ENCODE measurements at regions of chr7 and their contacts with region 1.

Region 1: GRCh38 chr7:38796626-38797501 is 112.1 kb downstream of the VPS41 start:
- DNase-seq: peak; percentile 6 to 68 (median 24)
- ATAC-seq: peak; percentile 29
- H3K4me3 ChIP-seq: no peak overlapping the region
- H3K4me3 Mint-ChIP-seq: no peak overlapping the region
- H3K27ac ChIP-seq: no peak overlapping the region
- H3K27ac Mint-ChIP-seq: no peak overlapping the region
- H3K4me1 ChIP-seq: no peaks in the 10 kb centered on the region
- H3K4me1 Mint-ChIP-seq: no peaks in the 10 kb centered on the region
- H3K27me3 ChIP-seq: no peaks in the 10 kb centered on the region
- H3K27me3 Mint-ChIP-seq: no peaks in the 10 kb centered on the region
- CTCF ChIP-seq: peak; percentile 79

Region 2: GRCh38 chr7:39465055-39465929 is 668.4 kb after region 1 on chr7:
- CTCF ChIA-PET with region 1: no interaction called
- POLR2A ChIA-PET with region 1: no interaction called
- intact Hi-C with region 1: loop called in 1 of 2 experiments (anchors 2 kb)
- DNase-seq: peak in 9 of 14 experiments; percentile 1 to 53 (median 14)
- ATAC-seq: peak; percentile 49
- H3K4me3 ChIP-seq: no peak overlapping the region
- H3K4me3 Mint-ChIP-seq: no peak overlapping the region
- H3K27ac ChIP-seq: no peak overlapping the region
- H3K27ac Mint-ChIP-seq: no peak overlapping the region
- H3K4me1 ChIP-seq: no peaks in the 10 kb centered on the region
- H3K4me1 Mint-ChIP-seq: peaks cover 7% of the 10 kb centered on the region
- H3K27me3 ChIP-seq: peaks cover 0 to 5% of the 10 kb centered on the region in 2 experiments
- H3K27me3 Mint-ChIP-seq: peaks cover 19% of the 10 kb centered on the region
- CTCF ChIP-seq: peak; percentile 69

Region 3: DNA sequence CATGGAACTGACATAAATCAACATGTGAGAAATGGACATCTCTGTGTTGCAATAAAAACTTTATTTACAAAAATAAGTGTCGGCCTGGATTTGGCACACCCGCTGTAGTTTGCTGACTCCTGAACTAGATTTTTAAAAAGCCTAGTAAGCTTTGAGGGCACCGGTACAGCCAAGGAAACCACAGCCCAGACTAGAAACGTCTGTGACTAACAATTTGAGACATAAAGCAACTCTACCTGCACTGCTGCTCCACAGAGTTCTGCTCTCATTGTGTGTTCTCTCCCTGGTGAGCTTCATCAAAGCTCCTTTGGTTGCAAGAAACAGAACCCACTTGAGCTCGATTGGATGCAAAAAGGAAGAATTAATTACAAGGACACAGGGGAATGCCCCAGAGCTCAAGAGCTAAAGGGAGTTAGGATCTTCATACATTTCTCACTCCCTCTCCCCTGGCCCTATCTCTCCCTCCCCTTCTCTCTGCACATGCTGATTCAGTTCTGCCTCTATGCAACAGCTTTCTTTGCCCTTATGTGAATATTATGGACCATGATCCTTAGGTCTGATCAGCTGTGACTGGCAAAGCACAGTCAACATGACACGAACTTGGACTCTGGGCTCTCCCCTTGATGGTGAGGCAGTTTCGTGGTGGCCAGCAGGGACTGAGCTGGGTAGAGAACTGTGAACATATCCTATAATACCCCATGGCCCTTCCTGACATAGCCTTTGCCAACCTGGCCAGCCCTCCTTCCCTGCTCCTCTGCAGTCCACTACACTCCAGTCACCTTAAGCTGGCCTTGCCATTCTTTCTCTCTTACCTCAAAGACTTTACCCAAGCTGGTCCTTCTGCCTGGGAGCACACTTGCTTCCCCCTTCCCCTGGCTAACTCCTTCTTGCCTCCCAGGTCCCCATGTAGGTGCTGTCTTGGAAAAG is 691.9 kb after region 1 on chr7:
- CTCF ChIA-PET with region 1: no interaction called
- POLR2A ChIA-PET with region 1: no interaction called
- intact Hi-C with region 1: no loop called
- DNase-seq: no peak
- ATAC-seq: no peak
- H3K4me3 ChIP-seq: no peak overlapping the region
- H3K4me3 Mint-ChIP-seq: no peak overlapping the region
- H3K27ac ChIP-seq: no peak overlapping the region
- H3K27ac Mint-ChIP-seq: no peak overlapping the region
- H3K4me1 ChIP-seq: no peaks in the 10 kb centered on the region
- H3K4me1 Mint-ChIP-seq: no peaks in the 10 kb centered on the region
- H3K27me3 ChIP-seq: peaks cover 6 to 8% of the 10 kb centered on the region in 2 experiments
- H3K27me3 Mint-ChIP-seq: peaks cover 45% of the 10 kb centered on the region
- CTCF ChIP-seq: no peak

Region 4: GRCh38 chr7:39517240-39517639 is 720.4 kb after region 1 on chr7:
- CTCF ChIA-PET with region 1: no interaction called
- POLR2A ChIA-PET with region 1: no interaction called
- intact Hi-C with region 1: loop called (anchors 1 kb)
- DNase-seq: no peak
- ATAC-seq: no peak
- H3K4me3 ChIP-seq: no peak overlapping the region
- H3K4me3 Mint-ChIP-seq: no peak overlapping the region
- H3K27ac ChIP-seq: no peak overlapping the region
- H3K27ac Mint-ChIP-seq: no peak overlapping the region
- H3K4me1 ChIP-seq: peaks cover 6% of the 10 kb centered on the region
- H3K4me1 Mint-ChIP-seq: peaks cover 4% of the 10 kb centered on the region
- H3K27me3 ChIP-seq: peaks cover 0 to 3% of the 10 kb centered on the region in 2 experiments
- H3K27me3 Mint-ChIP-seq: peaks cover 3% of the 10 kb centered on the region
- CTCF ChIP-seq: no peak

Region 5: DNA sequence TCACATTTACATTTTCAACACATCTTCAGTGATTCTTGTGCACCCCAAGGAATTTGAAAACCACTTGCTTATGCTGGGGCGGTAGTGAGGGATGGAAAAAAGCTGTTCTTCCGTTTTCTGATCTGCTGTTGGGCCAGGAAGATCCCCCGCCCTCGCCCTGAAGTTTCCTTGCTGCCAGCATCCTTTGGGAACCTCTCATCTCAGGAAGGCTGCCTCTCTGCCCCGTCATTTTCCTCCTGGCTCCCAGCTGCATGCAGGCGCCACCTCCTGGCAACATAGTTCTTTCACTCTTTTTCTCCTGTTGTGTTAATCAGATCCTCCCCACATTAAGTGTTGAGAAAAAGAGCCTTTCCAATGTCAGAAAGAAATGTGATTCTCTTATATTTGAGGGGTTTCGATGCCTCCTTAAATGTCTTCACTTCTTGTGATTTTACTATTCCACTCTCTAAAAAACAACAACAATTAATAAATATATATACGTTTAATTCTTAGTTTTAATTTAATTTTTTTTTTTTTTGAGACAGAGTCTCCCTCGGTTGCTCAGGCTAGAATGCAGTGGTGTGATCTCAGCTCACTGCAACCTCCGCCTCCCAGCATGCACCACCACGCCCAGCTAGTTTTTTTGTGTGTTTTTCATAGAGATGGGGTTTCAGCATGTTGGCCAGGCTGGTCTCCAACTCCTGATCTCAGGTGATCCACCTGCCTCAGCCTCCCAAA is 949.4 kb after region 1 on chr7:
- CTCF ChIA-PET with region 1: no interaction called
- POLR2A ChIA-PET with region 1: no interaction called
- intact Hi-C with region 1: loop called in 1 of 2 experiments (anchors 5 kb)
- DNase-seq: peak; percentile 23 to 79 (median 57)
- ATAC-seq: peak; percentile 58
- H3K4me3 ChIP-seq: no peak overlapping the region
- H3K4me3 Mint-ChIP-seq: no peak overlapping the region
- H3K27ac ChIP-seq: no peak overlapping the region
- H3K27ac Mint-ChIP-seq: no peak overlapping the region
- H3K4me1 ChIP-seq: no peaks in the 10 kb centered on the region
- H3K4me1 Mint-ChIP-seq: peaks cover 5% of the 10 kb centered on the region
- H3K27me3 ChIP-seq: no peaks in the 10 kb centered on the region
- H3K27me3 Mint-ChIP-seq: no peaks in the 10 kb centered on the region
- CTCF ChIP-seq: peak; percentile 78